ENCODE measurements at regions of chr3 and their contacts with region 1.

Region 1: GRCh38 chr3:138417559-138417982 is 16.8 kb upstream of the ESYT3 start:
- DNase-seq: peak; percentile 68
- H3K4me3 ChIP-seq: no peak overlapping the region
- H3K27ac ChIP-seq: no peak overlapping the region
- H3K4me1 ChIP-seq: no peaks in the 10 kb centered on the region
- CTCF ChIP-seq: peak; percentile 92

Region 2: DNA sequence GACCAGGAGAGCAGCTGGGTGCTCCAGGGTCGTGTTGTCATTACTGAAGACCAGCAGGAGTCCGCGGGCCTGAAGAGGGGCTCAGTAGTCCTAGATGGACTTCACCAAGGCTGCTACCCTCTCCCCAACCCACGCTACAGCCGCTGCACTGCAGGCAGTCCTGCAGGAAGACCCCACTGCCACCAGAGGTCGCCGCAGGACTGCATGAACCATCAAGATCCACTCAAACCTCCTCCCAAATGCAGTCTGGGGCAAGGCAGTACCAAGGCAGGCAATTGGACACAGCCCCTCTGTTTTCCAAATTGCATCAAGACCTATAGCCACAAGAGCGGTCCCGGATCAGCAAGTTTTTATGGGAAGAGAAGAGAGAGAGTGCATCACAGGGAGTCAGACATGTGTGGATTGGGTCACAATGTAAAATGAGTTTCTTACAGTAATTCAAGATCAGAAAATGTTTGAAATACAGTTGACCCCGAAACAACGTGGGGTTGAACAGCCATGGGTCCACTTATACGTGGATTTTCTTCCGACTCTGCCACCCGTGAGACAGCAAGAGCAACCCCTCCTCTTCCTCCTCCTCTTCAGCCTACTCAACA is 348.9 kb before region 1 on chr3:
- CTCF ChIA-PET with region 1: no interaction called
- POLR2A ChIA-PET with region 1: no interaction called
- intact Hi-C with region 1: loop called (anchors 10 kb)
- DNase-seq: peak; percentile 73
- H3K4me3 ChIP-seq: no peak overlapping the region
- H3K27ac ChIP-seq: no peak overlapping the region
- H3K4me1 ChIP-seq: no peaks in the 10 kb centered on the region
- CTCF ChIP-seq: peak; percentile 95

Region 3: DNA sequence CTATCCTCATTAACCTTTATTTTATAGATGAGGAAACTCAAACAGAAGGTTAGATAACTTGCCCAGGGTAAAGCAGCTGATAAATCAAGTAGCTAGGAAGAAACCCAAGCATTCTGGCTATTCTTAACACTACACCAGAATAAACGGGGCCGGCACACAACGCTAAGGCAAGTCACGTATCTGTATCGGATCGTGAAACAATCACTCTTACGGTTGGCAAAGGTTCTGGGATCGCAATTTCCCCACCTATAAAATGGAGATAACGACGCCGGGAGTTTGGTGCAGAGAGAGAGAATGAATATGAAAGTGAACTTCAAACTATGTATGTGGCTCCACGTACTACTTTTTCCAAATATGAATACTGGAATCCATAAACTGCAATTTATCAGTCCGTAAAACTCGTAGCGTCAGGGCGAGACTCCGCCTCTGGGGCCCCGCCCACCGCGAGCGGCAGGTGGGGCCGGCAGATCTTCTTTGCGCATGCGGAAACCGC is 230.7 kb before region 1 on chr3:
- CTCF ChIA-PET with region 1: no interaction called
- POLR2A ChIA-PET with region 1: no interaction called
- intact Hi-C with region 1: loop called (anchors 10 kb)
- DNase-seq: peak; percentile 92
- H3K4me3 ChIP-seq: peak overlapping the region; percentile 96
- H3K27ac ChIP-seq: peak overlapping the region; percentile 52
- H3K4me1 ChIP-seq: peaks cover 23% of the 10 kb centered on the region
- CTCF ChIP-seq: no peak

Region 4: GRCh38 chr3:138356730-138357405 is 60.7 kb before region 1 on chr3:
- CTCF ChIA-PET with region 1: no interaction called
- POLR2A ChIA-PET with region 1: no interaction called
- intact Hi-C with region 1: no loop called
- DNase-seq: no peak
- H3K4me3 ChIP-seq: no peak overlapping the region
- H3K27ac ChIP-seq: no peak overlapping the region
- H3K4me1 ChIP-seq: no peaks in the 10 kb centered on the region
- CTCF ChIP-seq: no peak

Region 5: GRCh38 chr3:138923531-138923994 is 506.0 kb after region 1 on chr3:
- CTCF ChIA-PET with region 1: interaction called, 3 read pairs
- POLR2A ChIA-PET with region 1: no interaction called
- intact Hi-C with region 1: loop called (anchors 1 kb)
- DNase-seq: peak; percentile 81
- H3K4me3 ChIP-seq: no peak overlapping the region
- H3K27ac ChIP-seq: no peak overlapping the region
- H3K4me1 ChIP-seq: no peaks in the 10 kb centered on the region
- CTCF ChIP-seq: peak; percentile 91

Measured in OCI-LY7 (cell line).